ENCODE measurements at regions of chr19 and their contacts with region 1.

Region 1: DNA sequence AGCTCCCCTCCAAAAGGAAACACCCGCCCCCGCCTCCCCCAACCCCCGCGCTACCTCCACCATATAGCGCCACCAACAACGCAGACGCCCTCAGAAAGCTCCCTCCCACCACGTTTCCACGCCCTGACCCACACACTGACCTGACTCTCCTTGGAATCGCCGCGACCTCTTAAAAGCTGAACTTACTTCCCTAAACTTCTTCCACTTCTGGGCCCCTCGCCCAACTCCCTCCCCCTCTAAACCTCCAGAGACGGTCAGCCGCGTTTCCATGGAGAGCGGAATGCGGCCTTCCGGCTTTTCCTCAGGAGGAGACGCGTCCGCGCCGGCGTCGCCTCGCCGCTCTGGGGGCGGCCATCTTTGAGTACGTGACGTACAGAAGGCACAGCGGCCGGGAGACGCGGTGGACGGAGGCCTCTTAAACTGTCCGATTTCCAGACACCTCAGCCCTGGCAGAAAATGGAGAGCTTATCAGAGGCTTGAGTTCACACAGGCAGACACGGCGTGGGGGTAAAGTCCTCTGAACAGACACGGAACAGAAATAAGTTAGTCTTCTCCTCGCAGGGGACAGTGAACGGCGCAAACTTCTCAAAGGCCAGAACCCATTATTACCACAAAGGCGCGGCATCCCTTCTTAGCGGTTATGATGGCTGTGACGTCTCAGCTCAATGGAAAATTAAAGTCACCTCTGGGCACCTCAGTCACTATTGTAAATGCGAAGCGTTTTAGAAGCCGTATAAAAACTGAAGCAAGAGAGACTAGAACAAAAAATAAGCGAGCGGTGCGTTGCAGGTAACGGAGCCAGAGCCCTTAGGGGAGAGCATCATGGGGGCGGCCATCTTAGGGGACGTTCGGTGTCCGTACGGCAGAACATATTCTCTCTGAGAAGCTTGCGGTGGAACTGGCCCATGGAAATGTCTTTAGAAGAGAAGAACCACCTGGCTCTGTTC is at the start of gene ZNF432:
- DNase-seq: peak; percentile 85
- H3K4me3 Mint-ChIP-seq: peak within 1 kb of the TSS; percentile 88
- H3K27ac Mint-ChIP-seq: peak within 1 kb of the TSS; percentile 95
- H3K4me1 Mint-ChIP-seq: peaks cover 17% of the 10 kb centered on the region
- H3K27me3 Mint-ChIP-seq: no peaks in the 10 kb centered on the region
- total RNA-seq, gene ZNF432: 12.8 to 13.6 TPM

Region 2: GRCh38 chr19:52007806-52008557 is 40.8 kb before region 1 on chr19 and contains the start of gene ZNF615:
- CTCF ChIA-PET with region 1: no interaction called
- POLR2A ChIA-PET with region 1: interaction called, 12 read pairs
- DNase-seq: peak; percentile 87
- H3K4me3 Mint-ChIP-seq: peak within 1 kb of the TSS; percentile 93
- H3K27ac Mint-ChIP-seq: peak within 1 kb of the TSS; percentile 92
- H3K4me1 Mint-ChIP-seq: peaks cover 19% of the 10 kb centered on the region
- H3K27me3 Mint-ChIP-seq: no peaks in the 10 kb centered on the region
- total RNA-seq, gene ZNF615: 11.4 to 12.1 TPM

Region 3: GRCh38 chr19:52028027-52028779 is 20.6 kb before region 1 on chr19 and contains the start of gene ZNF614:
- CTCF ChIA-PET with region 1: no interaction called
- POLR2A ChIA-PET with region 1: interaction called, 37 read pairs
- DNase-seq: peak; percentile 88
- H3K4me3 Mint-ChIP-seq: peak within 1 kb of the TSS; percentile 89
- H3K27ac Mint-ChIP-seq: peak within 1 kb of the TSS; percentile 97
- H3K4me1 Mint-ChIP-seq: peaks cover 25% of the 10 kb centered on the region
- H3K27me3 Mint-ChIP-seq: no peaks in the 10 kb centered on the region
- total RNA-seq, gene ZNF614: 8.0 to 8.2 TPM

Region 4: DNA sequence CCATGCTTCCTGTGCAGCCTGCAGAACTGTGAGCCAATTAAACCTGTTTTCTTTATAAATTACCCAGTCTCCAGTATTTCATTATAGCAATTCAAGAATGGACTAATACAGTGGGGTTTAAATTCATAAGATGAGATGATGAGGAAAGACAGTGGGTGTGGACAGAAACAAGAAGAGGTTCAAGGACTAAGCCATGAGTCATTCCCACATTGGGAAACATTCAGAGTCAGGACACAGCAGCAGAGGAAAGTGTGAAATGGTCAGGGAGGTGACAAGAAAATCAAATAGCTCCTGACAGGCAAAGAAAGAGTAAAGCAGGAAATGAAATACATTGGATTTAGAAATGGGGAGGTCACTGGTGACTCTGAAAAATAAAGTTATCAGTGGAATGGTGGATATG is 37.7 kb after region 1 on chr19:
- CTCF ChIA-PET with region 1: no interaction called
- POLR2A ChIA-PET with region 1: no interaction called
- DNase-seq: no peak
- H3K4me3 Mint-ChIP-seq: no peak overlapping the region
- H3K27ac Mint-ChIP-seq: no peak overlapping the region
- H3K4me1 Mint-ChIP-seq: peaks cover 5% of the 10 kb centered on the region
- H3K27me3 Mint-ChIP-seq: no peaks in the 10 kb centered on the region

Region 5: DNA sequence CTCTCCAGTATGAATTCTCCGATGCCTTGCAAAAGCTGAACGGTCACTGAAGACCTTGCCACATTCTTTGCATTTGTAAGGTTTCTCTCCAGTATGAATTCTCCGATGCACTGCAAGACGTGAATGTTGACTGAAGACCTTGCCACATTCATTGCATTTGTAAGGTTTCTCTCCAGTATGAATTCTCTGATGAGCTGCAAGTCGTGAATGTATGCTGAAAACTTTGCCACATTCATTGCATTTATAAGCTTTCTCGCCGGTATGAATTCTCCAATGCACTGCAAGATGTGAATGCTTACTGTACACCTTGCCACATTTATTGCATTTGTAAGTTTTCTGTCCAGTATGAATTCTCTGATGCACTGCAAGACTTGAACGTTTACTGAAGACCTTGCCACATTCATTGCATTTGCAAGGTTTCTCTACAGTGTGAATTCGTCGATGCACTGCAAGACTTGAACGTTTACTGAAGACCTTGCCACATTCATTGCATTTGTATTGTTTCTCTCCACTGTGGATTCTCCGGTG is 66.8 kb after region 1 on chr19:
- CTCF ChIA-PET with region 1: no interaction called
- POLR2A ChIA-PET with region 1: no interaction called
- DNase-seq: no peak
- H3K4me3 Mint-ChIP-seq: no peak overlapping the region
- H3K27ac Mint-ChIP-seq: no peak overlapping the region
- H3K4me1 Mint-ChIP-seq: no peaks in the 10 kb centered on the region
- H3K27me3 Mint-ChIP-seq: no peaks in the 10 kb centered on the region

Measured in activated CD4-positive, alpha-beta memory T cell treated with anti-CD3 and anti-CD28 coated beads, Interleukin-2, amount 10 ng/mL, durations not matched to agents 7 days and 5 days (primary cell).